ENCODE measurements at regions of chr20 and their contacts with region 1.

Region 1: GRCh38 chr20:63652168-63653077 is 801 bp downstream of the STMN3 start:
- DNase-seq: no peak
- H3K4me3 ChIP-seq: peak overlapping the region; percentile 4 to 43 (median 35)
- H3K27ac ChIP-seq: no peak overlapping the region
- H3K4me1 ChIP-seq: peaks cover 6% of the 10 kb centered on the region
- H3K27me3 ChIP-seq: peaks cover 1 to 11% of the 10 kb centered on the region in 2 experiments
- CTCF ChIP-seq: peak in 1 of 2 donors; percentile 3
- POLR2A ChIP-seq: no peak

Region 2: GRCh38 chr20:63223221-63224207 is 428.9 kb before region 1 on chr20:
- CTCF ChIA-PET with region 1: no interaction called
- POLR2A ChIA-PET with region 1: no interaction called
- dilution Hi-C with region 1: no loop called
- intact Hi-C with region 1: no loop called
- DNase-seq: peak; percentile 35
- H3K4me3 ChIP-seq: no peak overlapping the region
- H3K27ac ChIP-seq: no peak overlapping the region
- H3K4me1 ChIP-seq: no peaks in the 10 kb centered on the region
- H3K27me3 ChIP-seq: peaks cover 0 to 1% of the 10 kb centered on the region in 2 experiments
- CTCF ChIP-seq: peak; percentile 75 to 81
- POLR2A ChIP-seq: no peak

Region 3: DNA sequence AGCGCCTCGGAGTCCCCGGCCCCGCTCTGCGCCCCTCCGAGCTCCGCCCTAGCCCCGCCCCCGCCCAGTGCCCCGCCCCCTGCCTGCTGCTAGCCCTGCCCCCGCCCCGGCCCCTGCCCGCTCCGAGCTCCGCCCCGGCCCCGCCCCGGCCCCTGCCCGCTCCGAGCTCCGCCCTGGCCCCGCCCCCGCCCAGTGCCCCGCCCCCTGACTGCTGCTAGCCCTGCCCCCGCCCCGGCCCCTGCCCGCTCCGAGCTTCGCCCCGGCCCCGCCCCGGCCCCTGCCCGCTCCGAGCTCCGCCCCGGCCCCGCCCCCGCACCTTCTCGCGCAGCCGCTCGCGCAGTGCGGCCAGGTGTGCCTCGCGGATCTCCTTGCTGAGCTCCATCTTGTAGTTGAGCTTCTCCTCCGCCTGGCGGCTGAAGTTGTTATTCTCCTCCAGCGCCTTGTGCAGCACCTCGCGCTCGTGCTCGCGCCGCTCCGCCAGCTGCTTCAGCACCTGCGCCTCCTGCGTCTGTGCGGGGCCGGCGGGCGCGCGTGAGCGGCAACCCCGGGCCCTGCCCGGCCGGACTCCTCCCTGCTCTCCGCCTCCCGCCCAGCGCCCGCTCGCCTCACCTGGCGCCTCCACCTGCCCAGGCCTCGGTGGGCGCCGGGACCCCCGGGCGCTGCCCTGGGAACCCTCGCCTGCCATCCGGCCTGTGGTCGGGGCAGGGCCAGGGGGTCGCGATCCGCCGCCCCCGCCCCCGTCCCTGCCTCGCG is 10.5 kb before region 1 on chr20:
- CTCF ChIA-PET with region 1: interaction called, 10 read pairs
- POLR2A ChIA-PET with region 1: no interaction called
- dilution Hi-C with region 1: no loop called
- intact Hi-C with region 1: no loop called
- DNase-seq: peak; percentile 57
- H3K4me3 ChIP-seq: peak overlapping the region; percentile 11 to 50 (median 20)
- H3K27ac ChIP-seq: no peak overlapping the region
- H3K4me1 ChIP-seq: peaks cover 2% of the 10 kb centered on the region
- H3K27me3 ChIP-seq: no peaks in the 10 kb centered on the region
- CTCF ChIP-seq: peak in 1 of 2 donors; percentile 37
- POLR2A ChIP-seq: no peak